IMR-90 (cell line): ENCODE measurements at regions of chr7 and their contacts with region 1.

Region 1: GRCh38 chr7:151315038-151315655 is 26.5 kb upstream of the NUB1 start:
- DNase-seq: peak; percentile 65
- ATAC-seq: peak; percentile 78
- H3K4me3 ChIP-seq: no peak overlapping the region
- H3K27ac ChIP-seq: no peak overlapping the region
- H3K4me1 ChIP-seq: peaks cover 4% of the 10 kb centered on the region; the same call in 1 of the 2 replicates
- H3K27me3 ChIP-seq: peaks cover 11% of the 10 kb centered on the region; the same call in 1 of the 2 replicates
- CTCF ChIP-seq: peak; percentile 77
- POLR2A ChIP-seq: no peak
- RAD21 ChIP-seq: peak; percentile 79

Region 2: DNA sequence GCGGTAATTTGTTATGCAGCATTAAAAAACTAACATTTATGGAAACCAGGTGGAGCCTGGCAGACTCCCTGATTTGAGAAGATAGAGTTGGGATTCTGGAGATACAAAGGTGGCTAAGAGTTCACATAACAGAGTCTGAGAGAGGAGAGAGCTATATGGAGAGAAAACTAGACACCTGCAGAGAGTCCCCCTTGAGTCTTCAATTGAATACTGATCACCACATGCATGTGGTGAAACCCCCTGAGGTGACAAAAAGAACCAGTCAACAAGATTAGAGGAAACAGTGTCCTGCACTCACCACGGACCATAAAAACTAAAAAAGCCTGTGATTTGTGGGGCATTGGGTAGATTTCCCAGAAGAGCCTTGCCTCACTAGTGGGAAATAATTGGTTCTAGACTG is 619.5 kb before region 1 on chr7:
- CTCF ChIA-PET with region 1: no interaction called
- POLR2A ChIA-PET with region 1: no interaction called
- dilution Hi-C with region 1: no loop called
- in situ Hi-C with region 1: no loop called
- intact Hi-C with region 1: no loop called
- DNase-seq: no peak
- ATAC-seq: no peak
- H3K4me3 ChIP-seq: no peak overlapping the region
- H3K27ac ChIP-seq: no peak overlapping the region
- H3K4me1 ChIP-seq: no peaks in the 10 kb centered on the region
- H3K27me3 ChIP-seq: no peaks in the 10 kb centered on the region
- CTCF ChIP-seq: no peak
- POLR2A ChIP-seq: no peak
- RAD21 ChIP-seq: no peak

Region 3: GRCh38 chr7:151232091-151232916 is 82.8 kb before region 1 on chr7 and contains the start of gene CHPF2:
- CTCF ChIA-PET with region 1: no interaction called
- POLR2A ChIA-PET with region 1: no interaction called
- dilution Hi-C with region 1: no loop called
- in situ Hi-C with region 1: no loop called
- intact Hi-C with region 1: no loop called
- DNase-seq: peak; percentile 84
- ATAC-seq: peak; percentile 83
- H3K4me3 ChIP-seq: peak within 1 kb of the TSS; percentile 76
- H3K27ac ChIP-seq: peak within 1 kb of the TSS; percentile 84
- H3K4me1 ChIP-seq: peaks cover 14% of the 10 kb centered on the region
- H3K27me3 ChIP-seq: no peaks in the 10 kb centered on the region
- CTCF ChIP-seq: no peak
- POLR2A ChIP-seq: peak; percentile 74
- RAD21 ChIP-seq: no peak
- total RNA-seq, gene CHPF2: 26.2 and 26.9 TPM in 2 replicates

Region 4: DNA sequence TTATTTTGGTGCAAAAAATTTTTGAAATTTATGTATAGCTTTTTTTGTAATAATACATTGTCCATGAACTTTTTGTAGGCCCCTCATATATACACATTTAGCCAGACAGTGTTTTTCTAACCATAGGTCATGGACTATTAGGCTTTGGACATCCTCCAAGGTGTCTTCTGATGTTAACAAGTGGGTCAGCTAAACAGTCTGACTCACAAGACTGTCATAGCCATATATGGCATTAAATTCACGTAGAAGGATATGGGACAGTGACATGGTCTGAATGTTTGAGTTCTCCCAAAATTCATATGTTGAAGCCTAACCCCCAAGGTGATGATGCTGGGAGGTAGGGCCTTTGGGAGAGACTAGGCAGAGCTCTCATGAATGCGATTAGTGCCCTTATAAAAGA is 12.5 kb after region 1 on chr7:
- CTCF ChIA-PET with region 1: interaction called, 10 read pairs
- POLR2A ChIA-PET with region 1: no interaction called
- dilution Hi-C with region 1: no loop called
- in situ Hi-C with region 1: no loop called
- intact Hi-C with region 1: no loop called
- DNase-seq: peak; percentile 83
- ATAC-seq: peak; percentile 97
- H3K4me3 ChIP-seq: no peak overlapping the region
- H3K27ac ChIP-seq: peak overlapping the region; percentile 56
- H3K4me1 ChIP-seq: peaks cover 2% of the 10 kb centered on the region
- H3K27me3 ChIP-seq: peaks cover 2% of the 10 kb centered on the region
- CTCF ChIP-seq: no peak
- POLR2A ChIP-seq: no peak
- RAD21 ChIP-seq: no peak

Region 5: GRCh38 chr7:151341357-151342101 is 26.4 kb after region 1 on chr7 and contains the start of gene NUB1:
- CTCF ChIA-PET with region 1: interaction called, 4 read pairs
- POLR2A ChIA-PET with region 1: no interaction called
- dilution Hi-C with region 1: no loop called
- in situ Hi-C with region 1: no loop called
- intact Hi-C with region 1: loop called (anchors 1 kb)
- DNase-seq: peak; percentile 74
- ATAC-seq: peak; percentile 100
- H3K4me3 ChIP-seq: peak within 1 kb of the TSS; percentile 99
- H3K27ac ChIP-seq: peak within 1 kb of the TSS; percentile 75
- H3K4me1 ChIP-seq: peaks cover 3% of the 10 kb centered on the region
- H3K27me3 ChIP-seq: no peaks in the 10 kb centered on the region; the same call in 1 of the 2 replicates
- CTCF ChIP-seq: no peak
- POLR2A ChIP-seq: peak; percentile 62; the same call in 1 of the 2 replicates
- RAD21 ChIP-seq: no peak
- total RNA-seq, gene NUB1: 20.1 and 31.9 TPM in 2 replicates

Region 6: GRCh38 chr7:151351027-151351426 is 35.9 kb after region 1 on chr7:
- CTCF ChIA-PET with region 1: interaction called, 38 read pairs
- POLR2A ChIA-PET with region 1: no interaction called
- dilution Hi-C with region 1: no loop called
- in situ Hi-C with region 1: loop called (anchors 5 kb)
- intact Hi-C with region 1: loop called (anchors 1 kb)
- DNase-seq: no peak
- ATAC-seq: no peak
- H3K4me3 ChIP-seq: no peak overlapping the region
- H3K27ac ChIP-seq: no peak overlapping the region
- H3K4me1 ChIP-seq: no peaks in the 10 kb centered on the region
- H3K27me3 ChIP-seq: no peaks in the 10 kb centered on the region
- CTCF ChIP-seq: no peak
- POLR2A ChIP-seq: no peak
- RAD21 ChIP-seq: no peak

Region 7: DNA sequence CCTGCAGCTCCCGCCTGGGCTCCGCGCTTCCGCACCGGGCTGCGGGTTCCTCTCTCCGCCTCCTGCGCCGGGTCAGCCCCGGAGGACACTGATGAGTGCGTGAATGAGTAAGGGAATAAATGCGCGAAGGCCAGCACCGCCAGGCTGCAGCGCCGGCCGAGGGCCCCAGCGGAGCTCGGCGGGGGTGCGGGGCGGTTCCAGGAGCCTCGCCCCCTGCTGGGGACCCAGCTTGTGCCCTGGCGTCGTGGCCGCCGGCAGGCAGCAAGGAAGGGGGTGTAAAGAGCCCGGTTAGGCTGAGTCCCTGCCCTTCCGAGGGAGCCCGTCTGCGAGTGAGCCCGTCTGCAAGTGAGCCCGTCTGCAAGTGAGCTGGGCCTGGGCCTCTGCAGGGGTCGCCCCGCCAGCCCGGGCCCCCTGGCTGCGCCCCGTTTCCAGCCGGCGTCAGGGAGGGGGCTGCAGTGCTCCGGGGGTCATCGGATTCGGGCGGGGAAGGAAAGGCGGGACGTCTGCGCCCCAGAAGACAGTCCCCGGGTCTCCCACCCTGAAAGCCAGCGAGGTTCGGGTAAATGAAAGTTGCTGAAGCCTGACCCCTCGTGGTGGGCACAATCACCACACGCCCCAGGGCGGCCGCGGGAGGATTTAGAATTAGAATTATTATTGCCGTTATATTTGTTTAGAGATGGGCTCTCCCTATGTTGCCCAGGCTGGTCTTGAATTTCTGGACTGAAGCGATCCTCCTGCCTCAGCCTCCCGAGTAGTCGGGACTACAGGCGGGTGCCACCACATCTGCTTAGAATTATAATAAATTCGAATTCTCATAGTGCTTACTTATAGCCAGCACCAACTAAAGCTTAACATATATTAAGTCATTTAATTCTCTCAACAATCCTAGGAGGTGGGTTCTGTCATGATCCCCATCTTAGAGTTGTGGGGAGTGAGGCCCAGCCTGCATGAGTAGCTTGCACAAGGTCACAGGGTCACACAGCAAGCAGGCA is 133.4 kb after region 1 on chr7:
- CTCF ChIA-PET with region 1: interaction called, 5 read pairs
- POLR2A ChIA-PET with region 1: no interaction called
- dilution Hi-C with region 1: no loop called
- in situ Hi-C with region 1: no loop called
- intact Hi-C with region 1: loop called (anchors 1 kb)
- DNase-seq: peak; percentile 41
- ATAC-seq: peak; percentile 96
- H3K4me3 ChIP-seq: peak overlapping the region; percentile 36
- H3K27ac ChIP-seq: no peak overlapping the region
- H3K4me1 ChIP-seq: no peaks in the 10 kb centered on the region; the same call in 1 of the 2 replicates
- H3K27me3 ChIP-seq: no peaks in the 10 kb centered on the region; the same call in none of the 2 replicates
- CTCF ChIP-seq: peak; percentile 93
- POLR2A ChIP-seq: no peak
- RAD21 ChIP-seq: peak; percentile 82

Region 8: GRCh38 chr7:151759591-151760042 is 444.5 kb after region 1 on chr7:
- CTCF ChIA-PET with region 1: interaction called, 6 read pairs
- POLR2A ChIA-PET with region 1: no interaction called
- dilution Hi-C with region 1: no loop called
- in situ Hi-C with region 1: no loop called
- intact Hi-C with region 1: loop called (anchors 5 kb)
- DNase-seq: peak; percentile 65
- ATAC-seq: peak; percentile 59
- H3K4me3 ChIP-seq: no peak overlapping the region
- H3K27ac ChIP-seq: no peak overlapping the region
- H3K4me1 ChIP-seq: peaks cover 30% of the 10 kb centered on the region
- H3K27me3 ChIP-seq: peaks cover 32% of the 10 kb centered on the region
- CTCF ChIP-seq: peak; percentile 88
- POLR2A ChIP-seq: no peak
- RAD21 ChIP-seq: peak; percentile 96

Region 9: GRCh38 chr7:152383341-152384234 is 1068.4 kb after region 1 on chr7:
- CTCF ChIA-PET with region 1: no interaction called
- POLR2A ChIA-PET with region 1: no interaction called
- dilution Hi-C with region 1: no loop called
- in situ Hi-C with region 1: no loop called
- intact Hi-C with region 1: no loop called
- DNase-seq: peak; percentile 95
- ATAC-seq: peak; percentile 62
- H3K4me3 ChIP-seq: no peak overlapping the region
- H3K27ac ChIP-seq: no peak overlapping the region
- H3K4me1 ChIP-seq: peaks cover 7% of the 10 kb centered on the region
- H3K27me3 ChIP-seq: no peaks in the 10 kb centered on the region
- CTCF ChIP-seq: no peak
- POLR2A ChIP-seq: no peak
- RAD21 ChIP-seq: no peak